Activated CD8-positive, alpha-beta T cell treated with anti-CD3 and anti-CD28 coated beads for 36 hours (primary cell): ENCODE measurements at regions of chr12 and their contacts with region 1.

Region 1: GRCh38 chr12:10033783-10034545 is 3.5 kb downstream of the CLEC9A start:
- DNase-seq: no peak
- ATAC-seq: no peak
- H3K4me3 Mint-ChIP-seq: no peak overlapping the region
- H3K27ac Mint-ChIP-seq: no peak overlapping the region
- H3K4me1 Mint-ChIP-seq: no peaks in the 10 kb centered on the region
- H3K27me3 Mint-ChIP-seq: peaks cover 2% of the 10 kb centered on the region
- CTCF ChIP-seq: peak; percentile 70

Region 2: GRCh38 chr12:9932270-9932669 is 101.7 kb before region 1 on chr12 and contains the start of gene CLEC2A:
- CTCF ChIA-PET with region 1: no interaction called
- POLR2A ChIA-PET with region 1: no interaction called
- intact Hi-C with region 1: no loop called
- DNase-seq: no peak
- ATAC-seq: no peak
- H3K4me3 Mint-ChIP-seq: no peak within 1 kb of the TSS
- H3K27ac Mint-ChIP-seq: no peak within 1 kb of the TSS
- H3K4me1 Mint-ChIP-seq: peaks cover 2% of the 10 kb centered on the region
- H3K27me3 Mint-ChIP-seq: peaks cover 2% of the 10 kb centered on the region
- CTCF ChIP-seq: no peak
- total RNA-seq, gene CLEC2A: not detected

Region 3: GRCh38 chr12:10140001-10140400 is 106.0 kb after region 1 on chr12:
- CTCF ChIA-PET with region 1: interaction called, 25 read pairs
- POLR2A ChIA-PET with region 1: no interaction called
- intact Hi-C with region 1: loop called (anchors 5 kb)
- DNase-seq: peak; percentile 66
- ATAC-seq: peak; percentile 49
- H3K4me3 Mint-ChIP-seq: no peak overlapping the region
- H3K27ac Mint-ChIP-seq: no peak overlapping the region
- H3K4me1 Mint-ChIP-seq: peaks cover 2% of the 10 kb centered on the region
- H3K27me3 Mint-ChIP-seq: peaks cover 6% of the 10 kb centered on the region
- CTCF ChIP-seq: peak; percentile 66